ENCODE measurements at regions of chrX and their contacts with region 1.

Region 1: DNA sequence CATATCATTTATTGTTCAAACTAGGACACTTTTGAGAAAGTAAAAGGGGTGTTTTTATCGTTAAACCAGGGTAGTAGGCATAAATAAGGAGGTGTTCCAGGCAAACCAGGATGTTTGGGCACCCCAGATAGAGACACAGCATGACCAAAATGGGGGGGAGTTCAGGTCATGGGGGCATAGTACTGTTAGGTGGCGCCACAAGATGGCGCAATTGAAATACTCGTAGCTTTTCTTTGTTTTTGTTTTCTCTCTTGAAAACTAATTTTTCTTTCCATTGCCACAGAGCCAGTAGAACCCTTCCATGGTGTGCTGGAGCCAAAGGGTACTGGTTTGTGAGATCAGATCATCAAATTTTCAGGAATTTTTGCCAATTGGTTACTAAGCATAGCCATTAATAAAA is 283.4 kb downstream of the BCOR start:
- DNase-seq: peak; percentile 19
- H3K4me3 Mint-ChIP-seq: no peak overlapping the region
- H3K27ac Mint-ChIP-seq: no peak overlapping the region
- H3K4me1 Mint-ChIP-seq: peaks cover 33% of the 10 kb centered on the region
- H3K27me3 Mint-ChIP-seq: no peaks in the 10 kb centered on the region

Region 2: DNA sequence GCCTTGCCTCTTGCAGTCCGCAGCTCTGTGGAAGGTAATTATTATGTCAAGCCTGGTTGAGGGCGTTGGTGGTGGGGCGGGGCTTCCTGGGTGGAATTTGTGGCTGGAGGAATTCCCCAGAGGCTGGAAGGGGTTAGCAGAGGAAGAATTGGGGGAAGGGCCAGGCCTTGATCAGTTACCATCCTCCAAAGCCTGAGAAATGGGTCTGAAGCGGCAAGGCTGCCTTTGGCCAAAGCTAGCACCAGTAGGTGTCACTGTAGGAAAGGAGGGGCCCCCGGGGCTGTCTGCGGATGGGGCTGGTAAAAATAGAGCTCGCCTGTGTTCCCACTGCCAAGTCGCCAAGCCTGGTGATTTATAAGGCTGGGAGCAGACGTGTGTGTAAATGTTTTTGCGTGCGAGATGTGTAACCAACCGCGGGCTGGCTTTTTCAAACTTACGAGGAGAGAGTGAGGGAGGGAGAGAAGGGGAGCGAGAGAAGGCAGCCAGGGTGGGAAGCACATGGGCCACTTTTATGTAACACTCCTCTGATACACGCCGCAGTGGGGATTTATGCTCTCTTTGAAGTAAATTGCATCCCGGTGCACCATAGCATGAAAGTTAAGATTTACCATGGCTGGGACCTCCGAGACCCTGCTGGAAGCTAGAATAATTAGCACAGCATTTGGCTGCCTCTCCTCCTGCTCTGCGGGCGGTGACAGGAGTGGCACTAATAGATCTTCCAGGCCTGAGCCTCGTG is 83.6 kb before region 1 on chrX:
- intact Hi-C with region 1: loop called (anchors 10 kb)
- DNase-seq: peak; percentile 25
- H3K4me3 Mint-ChIP-seq: no peak overlapping the region
- H3K27ac Mint-ChIP-seq: peak overlapping the region; percentile 77
- H3K4me1 Mint-ChIP-seq: peaks cover 13% of the 10 kb centered on the region
- H3K27me3 Mint-ChIP-seq: no peaks in the 10 kb centered on the region

Region 3: DNA sequence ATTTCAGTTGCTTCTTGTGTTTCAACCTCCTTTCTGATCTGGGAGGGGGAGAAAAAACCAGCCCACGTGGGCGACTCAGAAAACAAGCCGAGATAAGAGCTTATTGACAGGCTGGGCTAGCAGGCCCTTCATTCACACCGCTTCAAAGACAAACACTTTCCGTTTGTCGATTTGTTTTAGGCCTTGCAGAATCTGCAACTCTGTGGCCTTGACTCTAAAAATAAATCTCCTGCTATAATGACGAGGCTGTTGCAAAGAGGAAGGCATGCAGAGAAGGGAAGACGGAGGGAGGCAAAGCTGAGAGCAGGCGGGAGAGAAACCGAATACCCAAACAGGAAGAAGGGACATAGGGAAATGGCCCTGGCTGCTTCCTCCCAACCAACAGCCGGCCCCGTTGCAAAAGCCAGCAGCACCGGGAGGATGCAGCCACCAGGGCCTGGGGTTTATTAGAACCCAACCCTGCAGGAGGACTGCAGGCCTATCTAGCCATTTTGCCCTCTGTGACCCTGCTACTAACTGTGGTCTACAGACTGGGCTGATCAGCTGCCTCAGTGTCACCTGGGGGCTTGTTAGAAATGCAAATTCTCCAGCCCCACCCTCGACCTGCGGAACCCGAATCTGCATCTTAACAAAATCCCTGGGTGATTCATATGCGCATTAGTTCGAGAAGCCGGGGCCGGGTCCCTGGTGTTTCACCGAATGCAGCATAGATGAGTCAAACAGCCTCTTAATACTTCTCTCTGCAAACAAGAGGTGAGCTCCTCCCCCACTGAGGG is 42.1 kb before region 1 on chrX:
- intact Hi-C with region 1: loop called (anchors 5 kb)
- DNase-seq: peak; percentile 37
- H3K4me3 Mint-ChIP-seq: peak overlapping the region; percentile 69
- H3K27ac Mint-ChIP-seq: peak overlapping the region; percentile 99
- H3K4me1 Mint-ChIP-seq: peaks cover 45% of the 10 kb centered on the region
- H3K27me3 Mint-ChIP-seq: no peaks in the 10 kb centered on the region

Region 4: GRCh38 chrX:39874202-39874816 is 59.9 kb after region 1 on chrX:
- intact Hi-C with region 1: loop called (anchors 5 kb)
- DNase-seq: peak; percentile 64
- H3K4me3 Mint-ChIP-seq: peak overlapping the region; percentile 7
- H3K27ac Mint-ChIP-seq: peak overlapping the region; percentile 89
- H3K4me1 Mint-ChIP-seq: peaks cover 31% of the 10 kb centered on the region
- H3K27me3 Mint-ChIP-seq: no peaks in the 10 kb centered on the region

Region 5: DNA sequence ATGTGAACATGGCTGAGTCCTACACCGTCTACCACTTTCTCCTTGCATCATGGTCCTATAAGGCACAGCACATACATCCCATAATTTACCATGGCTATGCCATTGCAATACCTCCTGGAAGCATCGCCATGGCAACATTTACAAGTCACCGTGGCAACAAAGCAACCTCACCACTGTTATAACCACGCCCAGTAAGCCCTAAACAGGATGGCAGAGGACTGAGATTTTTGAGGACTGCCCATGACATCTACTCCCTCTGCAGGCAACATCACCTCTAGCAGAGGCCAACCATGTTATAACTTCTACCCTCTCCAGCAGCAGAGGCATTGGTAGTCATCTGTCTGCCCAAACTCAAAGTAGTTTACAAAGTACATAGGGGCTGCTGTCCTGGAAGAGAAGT is 253.7 kb after region 1 on chrX:
- intact Hi-C with region 1: loop called (anchors 10 kb)
- DNase-seq: peak; percentile 11
- H3K4me3 Mint-ChIP-seq: no peak overlapping the region
- H3K27ac Mint-ChIP-seq: no peak overlapping the region
- H3K4me1 Mint-ChIP-seq: peaks cover 66% of the 10 kb centered on the region
- H3K27me3 Mint-ChIP-seq: no peaks in the 10 kb centered on the region

Region 6: DNA sequence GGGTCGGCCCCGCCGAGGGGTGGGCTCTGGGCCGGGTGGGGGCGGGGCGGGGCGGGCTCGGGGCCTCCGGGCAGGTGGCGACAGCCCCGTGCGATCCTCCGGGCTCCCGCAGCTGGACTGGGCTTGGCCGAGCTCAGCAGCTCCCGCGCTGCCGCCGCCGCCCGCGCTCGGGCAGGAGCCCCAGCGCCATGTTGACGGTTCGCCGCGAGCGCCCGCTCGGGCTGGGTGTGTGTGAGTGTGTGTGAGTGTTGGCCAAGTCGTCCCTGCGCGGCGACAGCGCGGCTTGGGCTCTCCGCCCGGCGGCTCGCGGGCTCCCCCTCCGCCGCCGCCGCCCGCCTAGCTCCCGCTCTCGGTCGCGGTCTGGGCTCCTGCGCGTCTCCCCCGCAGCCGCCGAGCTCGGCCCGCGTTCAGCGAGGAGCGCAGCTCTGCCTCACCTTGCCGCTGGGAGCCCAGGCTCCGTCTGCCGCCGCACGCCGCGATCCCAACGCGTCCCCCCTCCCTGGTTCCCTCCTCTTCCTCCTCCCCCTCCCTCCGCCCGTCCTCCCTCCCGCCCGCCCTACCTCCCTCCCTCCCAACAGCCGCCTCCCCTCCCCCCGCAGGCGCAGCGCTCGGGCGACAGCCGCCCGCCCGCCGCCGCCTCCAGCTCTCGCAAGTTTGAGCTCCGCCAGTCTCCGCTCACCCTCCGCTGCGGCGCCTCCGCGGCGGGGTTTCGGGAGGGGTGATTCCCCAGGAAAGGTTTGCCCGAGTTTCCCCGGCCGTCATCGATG is 283.3 kb after region 1 on chrX and contains the start of gene BCOR:
- intact Hi-C with region 1: loop called (anchors 10 kb)
- DNase-seq: peak; percentile 71
- H3K4me3 Mint-ChIP-seq: peak within 1 kb of the TSS; percentile 90
- H3K27ac Mint-ChIP-seq: peak within 1 kb of the TSS; percentile 95
- H3K4me1 Mint-ChIP-seq: peaks cover 28% of the 10 kb centered on the region
- H3K27me3 Mint-ChIP-seq: no peaks in the 10 kb centered on the region
- total RNA-seq, gene BCOR: 74.6 and 82.2 TPM in 2 replicates

Region 7: GRCh38 chrX:40169193-40170101 is 355.1 kb after region 1 on chrX:
- intact Hi-C with region 1: loop called (anchors 5 kb)
- DNase-seq: peak; percentile 80
- H3K4me3 Mint-ChIP-seq: peak overlapping the region; percentile 81
- H3K27ac Mint-ChIP-seq: peak overlapping the region; percentile 94
- H3K4me1 Mint-ChIP-seq: peaks cover 37% of the 10 kb centered on the region
- H3K27me3 Mint-ChIP-seq: no peaks in the 10 kb centered on the region

Measured in activated T-helper 2 cell treated with anti-CD3 and anti-CD28 coated beads, Interferon-gamma antibody, Interleukin-2, Interleukin-4, amounts not matched to agents 10 μg/mL and 5 μg/mL and 100 μg/mL, durations not matched to agents 14 hours and 24 hours and 36 hours (primary cell).